Right ventricle myocardium superior (tissue), 1 donor: ENCODE measurements at regions of chr5 and their contacts with region 1.

Region 1: DNA sequence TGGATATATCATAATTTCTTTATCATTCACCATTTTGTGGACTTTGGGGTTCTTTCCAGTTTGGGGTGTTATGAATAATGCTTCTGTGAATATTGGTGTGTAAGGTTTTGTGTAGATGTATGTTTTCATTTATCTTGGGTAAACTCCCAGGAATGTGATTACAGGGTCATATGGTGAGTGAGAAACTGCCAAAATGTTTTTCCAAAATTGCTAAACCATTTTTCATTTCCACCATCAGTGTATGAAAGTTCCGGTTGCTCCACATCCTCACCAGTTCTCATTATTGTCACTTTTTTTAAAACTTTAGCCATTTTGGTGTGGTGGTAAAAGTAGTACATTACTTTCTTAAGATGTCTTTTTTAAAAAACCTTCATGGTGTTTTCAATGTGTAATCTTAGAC is 152.9 kb downstream of the NIPBL start:
- DNase-seq: no peak
- ATAC-seq: no peak

Region 2: GRCh38 chr5:36988396-36988795 is 41.0 kb before region 1 on chr5:
- intact Hi-C with region 1: no loop called
- DNase-seq: no peak
- ATAC-seq: no peak

Region 3: GRCh38 chr5:37174928-37175327 is 145.5 kb after region 1 on chr5:
- intact Hi-C with region 1: loop called (anchors 10 kb)
- DNase-seq: no peak
- ATAC-seq: no peak